ENCODE measurements at regions of chr1 and their contacts with region 1.

Region 1: GRCh38 chr1:156941655-156942054 is 21.2 kb downstream of the LRRC71 start:
- DNase-seq: no peak

Region 2: DNA sequence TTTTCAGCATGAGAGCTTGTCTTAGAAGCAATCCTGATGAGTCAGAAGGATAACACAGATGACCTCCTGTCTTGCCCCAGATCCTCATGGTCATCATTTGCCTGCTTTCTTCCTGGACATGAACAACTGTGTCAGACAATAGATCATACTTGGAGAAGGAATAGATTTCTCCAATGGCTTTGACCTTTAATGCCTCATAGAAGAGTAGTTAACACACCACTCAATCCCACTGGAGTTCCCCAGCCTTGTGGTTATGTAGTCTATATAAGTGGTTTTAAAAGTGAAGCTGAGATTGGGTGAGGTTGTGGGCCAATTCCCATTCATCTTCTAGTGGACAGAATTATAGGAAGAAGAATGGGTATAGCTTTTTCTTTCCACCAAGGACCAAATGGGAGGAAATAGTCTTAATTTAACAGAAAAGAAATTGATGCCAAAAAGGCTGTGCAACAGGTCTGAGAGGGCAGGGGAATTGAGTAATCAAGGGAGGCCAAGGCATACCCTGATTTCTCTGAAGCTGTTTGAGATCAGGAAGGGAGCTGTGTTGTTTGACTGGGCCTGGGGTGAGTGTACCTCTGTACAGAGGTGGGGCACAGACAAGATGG is 160.0 kb before region 1 on chr1:
- CTCF ChIA-PET with region 1: no interaction called
- POLR2A ChIA-PET with region 1: no interaction called
- DNase-seq: no peak

Region 3: DNA sequence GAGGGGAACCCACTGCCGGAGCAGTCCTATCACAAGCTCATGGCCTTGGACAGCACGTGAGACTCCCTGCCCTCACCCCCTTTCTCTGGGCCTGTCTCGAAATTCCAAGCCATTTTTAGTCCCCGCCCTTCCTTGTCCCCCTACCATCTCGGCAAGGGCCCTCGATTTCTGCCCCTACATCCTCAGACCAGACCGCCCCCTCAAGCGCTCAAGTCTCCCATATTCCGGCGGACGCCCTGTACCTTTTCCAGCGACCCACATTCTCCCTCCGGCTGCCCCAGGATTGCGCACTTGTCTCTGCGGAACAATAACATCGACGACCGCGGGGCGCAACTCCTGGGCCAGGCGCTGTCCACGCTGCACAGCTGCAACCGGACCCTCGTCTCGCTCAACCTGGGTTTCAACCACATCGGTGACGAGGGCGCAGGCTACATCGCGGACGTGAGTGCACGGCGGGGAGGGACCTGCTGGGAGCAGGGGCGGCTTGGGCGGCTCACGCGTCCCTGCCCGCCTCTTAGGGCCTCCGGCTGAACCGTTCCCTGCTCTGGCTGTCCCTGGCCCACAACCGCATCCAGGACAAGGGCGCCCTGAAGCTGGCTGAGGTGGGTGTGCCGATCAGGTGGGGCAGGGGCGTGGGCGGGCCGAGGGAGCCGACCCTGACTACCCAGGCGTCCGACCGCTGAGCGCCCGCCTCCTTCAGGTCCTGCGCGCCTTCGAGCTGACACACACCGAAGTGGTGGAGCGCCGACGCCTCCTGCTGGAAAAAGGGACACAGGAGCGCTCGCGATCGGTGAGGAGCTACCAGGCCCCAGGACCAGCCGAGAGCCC is 14.2 kb before region 1 on chr1:
- CTCF ChIA-PET with region 1: interaction called, 13 read pairs
- POLR2A ChIA-PET with region 1: no interaction called
- DNase-seq: peak; percentile 89

Region 4: DNA sequence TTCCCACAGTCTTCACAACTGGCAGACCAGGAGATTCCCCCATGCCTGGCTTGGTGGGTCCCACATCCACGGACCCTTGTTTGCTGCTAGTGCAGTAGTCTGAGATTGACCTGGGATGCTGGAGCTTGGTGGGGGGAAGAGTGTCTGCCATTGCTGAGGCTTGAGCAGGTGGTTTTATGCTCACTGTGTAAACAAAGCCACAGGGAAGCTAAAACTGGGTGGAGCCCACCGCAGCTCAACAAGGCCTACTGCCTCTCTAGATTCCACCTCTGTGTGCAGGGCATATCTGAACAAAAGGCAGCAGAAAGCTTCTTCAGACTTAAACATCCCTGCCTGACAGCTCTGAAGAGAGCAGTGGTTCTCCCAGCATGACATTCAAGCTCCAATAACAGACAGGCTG is 373.9 kb after region 1 on chr1:
- CTCF ChIA-PET with region 1: no interaction called
- POLR2A ChIA-PET with region 1: no interaction called
- DNase-seq: no peak

Measured in HEK293T (cell line).